ENCODE measurements at regions of chr17 and their contacts with region 1.

Region 1: DNA sequence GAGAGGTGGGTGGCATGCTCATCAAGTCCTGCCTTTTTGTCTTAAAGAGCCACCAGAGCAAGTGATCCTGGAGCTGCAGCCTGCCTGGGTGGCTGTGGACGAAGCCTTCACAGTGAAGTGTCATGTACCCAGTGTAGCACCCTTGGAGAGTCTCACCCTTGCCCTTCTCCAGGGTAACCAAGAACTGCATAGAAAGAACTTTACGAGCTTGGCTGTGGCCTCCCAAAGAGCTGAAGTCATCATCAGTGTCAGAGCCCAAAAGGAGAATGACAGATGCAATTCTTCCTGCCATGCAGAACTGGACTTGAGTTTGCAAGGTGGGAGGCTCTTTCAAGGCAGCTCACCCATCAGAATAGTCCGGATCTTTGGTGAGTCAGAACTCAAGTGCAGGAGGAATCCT is 14.2 kb downstream of the CSH2 start:
- DNase-seq: no peak
- H3K4me3 Mint-ChIP-seq: no peak overlapping the region
- H3K27ac Mint-ChIP-seq: no peak overlapping the region
- H3K4me1 Mint-ChIP-seq: no peaks in the 10 kb centered on the region
- H3K27me3 Mint-ChIP-seq: no peaks in the 10 kb centered on the region

Region 2: DNA sequence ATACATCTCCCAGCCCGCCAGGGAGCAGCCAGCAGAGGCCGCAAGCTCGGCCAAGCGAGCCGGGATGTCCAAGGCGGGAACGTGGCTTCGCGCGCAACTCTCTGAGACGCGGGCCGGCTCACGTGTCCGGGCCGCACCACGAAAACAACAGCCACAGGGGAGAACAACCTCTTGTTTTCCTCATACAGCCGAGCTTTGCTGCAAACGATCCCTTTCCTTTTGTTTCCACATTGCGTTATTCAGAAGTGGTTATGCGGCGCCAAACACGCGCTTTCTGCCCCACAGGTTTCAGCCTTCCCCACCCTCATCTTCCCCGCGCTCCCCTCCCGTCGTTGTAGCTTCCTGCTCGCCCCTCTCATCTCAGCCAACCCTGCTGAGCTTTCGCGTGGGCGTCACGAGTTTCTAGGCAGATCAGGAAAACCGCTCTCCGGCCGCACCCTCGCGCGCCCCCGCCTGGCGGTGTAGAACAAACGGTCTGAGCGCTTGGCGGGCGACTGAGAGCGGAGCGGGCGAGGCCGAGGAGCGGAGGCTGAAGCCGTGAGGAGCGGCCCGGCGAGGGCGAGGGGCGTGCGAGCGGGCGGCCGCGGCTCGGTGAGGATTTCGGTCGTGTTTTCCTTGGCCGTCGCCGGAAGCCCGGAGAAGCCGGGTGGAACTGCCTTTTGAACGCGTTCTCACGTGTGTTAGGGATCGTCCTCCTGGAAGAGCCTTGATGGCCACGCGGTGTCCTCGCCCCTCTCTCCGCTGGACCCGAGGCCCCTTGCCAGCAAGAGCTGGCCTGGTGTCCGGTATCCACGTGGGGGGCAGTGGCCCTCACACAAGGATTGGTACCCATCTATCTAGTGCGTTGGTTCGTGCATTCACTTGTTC is 10.2 kb before region 1 on chr17:
- CTCF ChIA-PET with region 1: interaction called, 38 read pairs
- intact Hi-C with region 1: no loop called
- DNase-seq: peak; percentile 98
- H3K4me3 Mint-ChIP-seq: peak overlapping the region; percentile 75
- H3K27ac Mint-ChIP-seq: peak overlapping the region; percentile 82
- H3K4me1 Mint-ChIP-seq: peaks cover 24% of the 10 kb centered on the region
- H3K27me3 Mint-ChIP-seq: no peaks in the 10 kb centered on the region

Region 3: GRCh38 chr17:63881876-63882601 is 22.8 kb after region 1 on chr17 and contains the start of gene GH2:
- CTCF ChIA-PET with region 1: interaction called, 20 read pairs
- intact Hi-C with region 1: no loop called
- DNase-seq: peak; percentile 79
- H3K4me3 Mint-ChIP-seq: no peak within 1 kb of the TSS
- H3K27ac Mint-ChIP-seq: no peak within 1 kb of the TSS
- H3K4me1 Mint-ChIP-seq: peaks cover 2% of the 10 kb centered on the region
- H3K27me3 Mint-ChIP-seq: no peaks in the 10 kb centered on the region
- total RNA-seq, gene GH2: not detected

Region 4: GRCh38 chr17:63911657-63912426 is 52.6 kb after region 1 on chr17:
- CTCF ChIA-PET with region 1: no interaction called
- intact Hi-C with region 1: no loop called
- DNase-seq: peak; percentile 74
- H3K4me3 Mint-ChIP-seq: no peak overlapping the region
- H3K27ac Mint-ChIP-seq: no peak overlapping the region
- H3K4me1 Mint-ChIP-seq: no peaks in the 10 kb centered on the region
- H3K27me3 Mint-ChIP-seq: no peaks in the 10 kb centered on the region